ENCODE measurements at regions of chr12 and their contacts with region 1.

Region 1: GRCh38 chr12:111599459-111600204 is 517 bp upstream of the ATXN2 start:
- DNase-seq: peak; percentile 93 to 95 (median 94)
- ATAC-seq: peak; percentile 87 to 92 (median 90)
- H3K4me3 ChIP-seq: peak overlapping the region; percentile 72 to 98 (median 96)
- H3K27ac ChIP-seq: peak overlapping the region; percentile 93 to 100 (median 98)
- H3K4me1 ChIP-seq: peaks cover 0 to 43% (median 31%) of the 10 kb centered on the region in 12 donors
- H3K27me3 ChIP-seq: no peaks in the 10 kb centered on the region
- CTCF ChIP-seq: no peak
- POLR2A ChIP-seq: peak in 1 of 2 donors; percentile 54

Region 2: DNA sequence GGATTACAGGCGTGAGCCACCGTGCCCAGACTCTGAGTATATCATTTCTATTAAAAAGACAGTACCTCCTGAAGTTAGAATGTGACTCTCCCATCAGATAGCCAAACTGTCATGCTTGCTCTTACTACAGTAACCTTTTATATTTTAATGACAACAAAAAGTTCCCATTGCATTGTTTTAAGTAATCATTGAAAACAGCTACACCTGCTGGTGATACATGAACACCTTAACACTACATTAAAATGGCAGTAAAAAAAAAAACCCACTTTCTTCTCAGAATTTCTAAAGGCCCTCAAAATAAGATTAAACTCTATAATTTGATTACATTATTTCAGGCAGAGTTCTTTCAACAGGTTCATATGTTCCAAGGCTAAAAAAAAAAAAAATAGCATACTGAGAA is 117.2 kb before region 1 on chr12:
- intact Hi-C with region 1: no loop called
- DNase-seq: no peak
- ATAC-seq: no peak
- H3K4me3 ChIP-seq: no peak overlapping the region
- H3K27ac ChIP-seq: no peak overlapping the region
- H3K4me1 ChIP-seq: peaks cover 0 to 5% (median 0%) of the 10 kb centered on the region in 12 donors
- H3K27me3 ChIP-seq: no peaks in the 10 kb centered on the region
- CTCF ChIP-seq: peak in 8 of 12 donors; percentile 8 to 39 (median 22)
- POLR2A ChIP-seq: no peak

Region 3: GRCh38 chr12:111557271-111558106 is 42.1 kb before region 1 on chr12:
- intact Hi-C with region 1: loop called in 1 of 10 experiments (anchors 5 kb)
- DNase-seq: no peak
- ATAC-seq: peak in 1 of 4 donors; percentile 31
- H3K4me3 ChIP-seq: no peak overlapping the region
- H3K27ac ChIP-seq: no peak overlapping the region
- H3K4me1 ChIP-seq: peaks cover 0 to 42% (median 8%) of the 10 kb centered on the region in 12 donors
- H3K27me3 ChIP-seq: no peaks in the 10 kb centered on the region
- CTCF ChIP-seq: no peak
- POLR2A ChIP-seq: no peak

Region 4: DNA sequence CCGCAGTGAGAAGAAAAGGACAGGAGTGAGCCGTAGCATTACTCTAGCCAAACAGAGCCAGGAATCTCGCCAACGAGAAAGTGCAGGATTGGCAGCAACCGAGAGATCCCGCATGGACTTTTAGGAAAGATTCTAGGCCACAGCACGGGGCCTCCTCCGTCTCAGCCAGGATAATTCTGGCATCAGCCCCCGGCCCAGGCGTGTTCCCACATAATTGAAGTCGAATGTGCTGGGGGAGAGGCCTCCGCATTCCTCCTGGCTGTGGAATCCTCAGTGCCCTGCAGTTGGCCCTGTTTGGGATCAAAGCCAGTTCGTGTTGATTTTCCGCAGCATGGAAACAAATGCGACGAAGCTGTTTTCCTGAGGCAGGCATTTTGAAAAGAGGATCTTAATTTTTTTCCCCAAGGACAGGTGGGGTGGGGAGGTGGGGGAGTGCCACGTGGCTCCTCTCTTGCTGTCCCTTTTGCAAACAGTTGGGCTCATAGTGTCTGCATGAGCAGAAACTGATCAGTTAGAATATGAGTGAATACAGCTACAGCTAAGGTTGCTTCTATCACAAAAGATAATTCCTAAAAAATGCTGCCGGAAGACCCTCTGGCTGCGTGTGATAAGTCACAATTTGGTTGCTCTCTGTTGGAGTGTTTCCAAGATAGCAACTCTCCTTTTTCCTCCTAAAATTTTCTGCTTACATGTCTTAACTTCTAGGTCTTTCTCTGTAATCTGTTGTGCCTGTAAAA is 36.7 kb after region 1 on chr12:
- intact Hi-C with region 1: loop called in 1 of 10 experiments (anchors 5 kb)
- DNase-seq: peak; percentile 51 to 69 (median 61)
- ATAC-seq: peak; percentile 70 to 87 (median 74)
- H3K4me3 ChIP-seq: peak overlapping the region in 5 of 12 donors; percentile 5 to 23 (median 14)
- H3K27ac ChIP-seq: peak overlapping the region in 10 of 12 donors; percentile 17 to 74 (median 68)
- H3K4me1 ChIP-seq: peaks cover 0 to 23% (median 15%) of the 10 kb centered on the region in 12 donors
- H3K27me3 ChIP-seq: no peaks in the 10 kb centered on the region
- CTCF ChIP-seq: no peak
- POLR2A ChIP-seq: no peak

Measured in heart left ventricle (tissue), 16 donors.